ENCODE measurements at regions of chr11 and their contacts with region 1.

Region 1: GRCh38 chr11:18634140-18635032 is at the start of gene SPTY2D1:
- DNase-seq: peak; percentile 97
- H3K4me3 Mint-ChIP-seq: peak within 1 kb of the TSS; percentile 97
- H3K27ac Mint-ChIP-seq: peak within 1 kb of the TSS; percentile 99
- H3K4me1 Mint-ChIP-seq: peaks cover 32% of the 10 kb centered on the region
- H3K27me3 Mint-ChIP-seq: no peaks in the 10 kb centered on the region
- total RNA-seq, gene SPTY2D1: 29.2 and 29.6 TPM in 2 replicates

Region 2: DNA sequence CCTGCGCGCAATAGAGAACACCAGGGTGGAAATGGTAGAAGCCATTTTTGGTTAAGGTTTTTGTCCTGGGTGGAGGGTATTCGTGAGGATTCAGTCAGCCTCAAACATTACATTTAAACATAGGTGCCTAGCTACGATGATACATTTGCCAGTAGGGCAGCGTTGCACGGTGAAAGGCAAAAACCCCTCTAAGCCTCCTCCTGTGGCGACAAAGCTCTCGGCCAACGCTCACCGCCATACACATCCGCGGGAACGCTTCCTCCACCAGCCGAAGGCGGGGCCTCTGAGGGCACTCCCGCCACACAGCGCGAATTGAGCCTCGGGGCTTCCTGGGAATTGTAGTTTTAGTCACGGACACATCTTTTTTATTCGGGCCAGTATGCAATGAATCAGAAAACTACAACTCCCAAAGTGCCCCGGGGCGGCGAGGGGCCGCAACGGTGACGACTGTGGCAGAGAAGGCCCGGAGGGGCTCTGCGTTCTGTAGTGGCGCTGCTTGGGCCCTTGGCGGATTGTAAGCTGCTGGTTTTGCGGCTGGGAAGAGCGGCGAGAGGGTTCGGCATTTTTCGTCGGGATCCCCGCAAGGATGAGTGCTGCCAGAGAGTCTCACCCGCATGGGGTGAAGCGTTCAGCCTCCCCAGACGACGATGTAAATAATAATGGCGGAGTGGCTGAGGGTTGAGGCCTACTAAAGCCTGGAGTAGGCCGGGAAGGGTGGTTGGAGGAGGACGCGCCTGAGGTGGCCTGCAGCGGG is 1896.0 kb before region 1 on chr11 and contains the start of gene C11orf58:
- intact Hi-C with region 1: loop called (anchors 1 kb)
- DNase-seq: peak; percentile 93
- H3K4me3 Mint-ChIP-seq: peak within 1 kb of the TSS; percentile 73
- H3K27ac Mint-ChIP-seq: peak within 1 kb of the TSS; percentile 88
- H3K4me1 Mint-ChIP-seq: peaks cover 32% of the 10 kb centered on the region
- H3K27me3 Mint-ChIP-seq: no peaks in the 10 kb centered on the region
- total RNA-seq, gene C11orf58: 150 and 152 TPM in 2 replicates

Region 3: DNA sequence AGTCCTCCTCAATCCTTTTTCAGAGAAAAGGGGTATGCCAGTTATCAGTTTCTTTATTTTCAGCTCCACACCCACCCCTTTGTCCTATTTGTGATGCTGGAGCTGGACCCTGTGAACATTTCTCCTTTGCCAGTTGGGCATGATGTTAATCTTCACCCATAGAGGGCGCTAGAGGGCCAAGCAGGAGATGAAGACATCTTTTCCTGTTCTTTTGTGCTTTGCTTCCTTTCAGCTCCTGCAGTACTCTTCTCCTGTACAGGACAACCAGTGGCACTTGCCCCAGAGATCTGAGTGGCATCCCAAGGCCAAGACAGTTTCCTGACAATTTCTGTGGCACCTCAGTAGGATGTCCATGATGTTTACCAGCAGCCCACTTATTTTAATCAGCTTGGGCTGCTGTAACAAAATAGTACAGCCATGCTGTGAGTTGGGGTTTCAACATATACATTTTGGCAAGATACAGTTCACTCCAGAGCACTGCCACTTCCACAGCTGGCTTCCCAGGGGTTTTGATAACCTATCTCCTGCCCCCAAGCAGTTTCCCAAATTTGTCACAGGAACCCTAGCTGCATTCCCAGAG is 390.5 kb before region 1 on chr11:
- intact Hi-C with region 1: loop called (anchors 10 kb)
- DNase-seq: peak; percentile 65
- H3K4me3 Mint-ChIP-seq: no peak overlapping the region
- H3K27ac Mint-ChIP-seq: peak overlapping the region; percentile 10
- H3K4me1 Mint-ChIP-seq: peaks cover 39% of the 10 kb centered on the region
- H3K27me3 Mint-ChIP-seq: peaks cover 27% of the 10 kb centered on the region

Region 4: DNA sequence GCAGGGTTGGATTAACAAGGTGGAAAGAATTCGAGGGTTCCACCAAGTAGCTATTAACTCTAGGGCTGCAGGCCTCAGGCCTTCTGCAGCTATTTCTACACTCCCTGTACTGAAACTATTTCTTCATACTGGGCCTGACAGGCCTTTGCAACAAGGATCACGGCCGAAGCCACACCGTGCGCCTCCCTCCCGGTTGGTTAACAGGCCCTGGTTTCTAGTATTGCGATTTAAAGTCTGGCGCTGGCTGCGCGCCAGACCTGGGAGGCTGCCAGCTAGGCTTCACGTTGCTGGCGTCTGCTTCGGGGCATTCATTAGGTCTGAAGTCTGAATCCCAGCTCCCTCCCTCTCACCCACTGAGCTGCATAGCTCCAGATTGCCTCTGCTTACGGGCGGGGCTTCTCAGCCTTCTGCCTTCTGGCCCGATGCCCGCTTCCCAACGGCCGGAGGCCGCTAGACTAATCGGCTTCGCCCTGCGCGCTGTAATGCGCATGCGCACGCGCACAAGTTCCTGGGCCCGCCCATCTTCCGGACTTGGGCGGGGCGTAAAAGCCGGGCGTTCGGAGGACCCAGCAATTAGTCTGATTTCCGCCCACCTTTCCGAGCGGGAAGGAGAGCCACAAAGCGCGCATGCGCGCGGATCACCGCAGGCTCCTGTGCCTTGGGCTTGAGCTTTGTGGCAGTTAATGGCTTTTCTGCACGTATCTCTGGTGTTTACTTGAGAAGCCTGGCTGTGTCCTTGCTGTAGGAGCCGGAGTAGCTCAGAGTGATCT is 238.5 kb before region 1 on chr11:
- intact Hi-C with region 1: loop called (anchors 1 kb)
- DNase-seq: peak; percentile 96
- H3K4me3 Mint-ChIP-seq: peak overlapping the region; percentile 99
- H3K27ac Mint-ChIP-seq: peak overlapping the region; percentile 98
- H3K4me1 Mint-ChIP-seq: peaks cover 67% of the 10 kb centered on the region
- H3K27me3 Mint-ChIP-seq: no peaks in the 10 kb centered on the region

Region 5: DNA sequence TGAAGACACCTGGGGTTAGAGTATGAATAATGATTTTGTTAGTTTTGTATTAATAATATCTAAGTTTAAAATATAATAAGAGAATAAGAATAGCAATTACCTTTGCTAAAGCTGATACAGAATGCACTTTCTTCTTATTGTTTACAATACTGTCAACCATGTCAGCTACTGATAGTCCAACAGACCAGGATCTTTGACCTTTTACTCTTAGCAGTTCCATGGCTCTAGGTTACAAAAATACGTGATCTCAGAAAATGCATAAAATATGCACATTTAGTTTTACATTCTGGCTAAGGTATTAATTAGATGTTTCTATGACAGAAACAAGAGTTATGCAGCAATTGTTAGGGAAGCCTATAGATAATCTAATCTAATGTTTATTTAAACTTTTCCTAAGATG is 100.2 kb before region 1 on chr11:
- intact Hi-C with region 1: no loop called
- DNase-seq: no peak
- H3K4me3 Mint-ChIP-seq: no peak overlapping the region
- H3K27ac Mint-ChIP-seq: no peak overlapping the region
- H3K4me1 Mint-ChIP-seq: no peaks in the 10 kb centered on the region
- H3K27me3 Mint-ChIP-seq: no peaks in the 10 kb centered on the region

Region 6: GRCh38 chr11:18578975-18579598 is 55.3 kb before region 1 on chr11:
- intact Hi-C with region 1: loop called (anchors 2 kb)
- DNase-seq: peak; percentile 21
- H3K4me3 Mint-ChIP-seq: peak overlapping the region; percentile 61
- H3K27ac Mint-ChIP-seq: peak overlapping the region; percentile 80
- H3K4me1 Mint-ChIP-seq: peaks cover 65% of the 10 kb centered on the region
- H3K27me3 Mint-ChIP-seq: no peaks in the 10 kb centered on the region

Region 7: GRCh38 chr11:18650859-18651557 is 16.6 kb after region 1 on chr11:
- intact Hi-C with region 1: loop called (anchors 1 kb)
- DNase-seq: peak; percentile 47
- H3K4me3 Mint-ChIP-seq: no peak overlapping the region
- H3K27ac Mint-ChIP-seq: no peak overlapping the region
- H3K4me1 Mint-ChIP-seq: peaks cover 13% of the 10 kb centered on the region
- H3K27me3 Mint-ChIP-seq: no peaks in the 10 kb centered on the region

Region 8: DNA sequence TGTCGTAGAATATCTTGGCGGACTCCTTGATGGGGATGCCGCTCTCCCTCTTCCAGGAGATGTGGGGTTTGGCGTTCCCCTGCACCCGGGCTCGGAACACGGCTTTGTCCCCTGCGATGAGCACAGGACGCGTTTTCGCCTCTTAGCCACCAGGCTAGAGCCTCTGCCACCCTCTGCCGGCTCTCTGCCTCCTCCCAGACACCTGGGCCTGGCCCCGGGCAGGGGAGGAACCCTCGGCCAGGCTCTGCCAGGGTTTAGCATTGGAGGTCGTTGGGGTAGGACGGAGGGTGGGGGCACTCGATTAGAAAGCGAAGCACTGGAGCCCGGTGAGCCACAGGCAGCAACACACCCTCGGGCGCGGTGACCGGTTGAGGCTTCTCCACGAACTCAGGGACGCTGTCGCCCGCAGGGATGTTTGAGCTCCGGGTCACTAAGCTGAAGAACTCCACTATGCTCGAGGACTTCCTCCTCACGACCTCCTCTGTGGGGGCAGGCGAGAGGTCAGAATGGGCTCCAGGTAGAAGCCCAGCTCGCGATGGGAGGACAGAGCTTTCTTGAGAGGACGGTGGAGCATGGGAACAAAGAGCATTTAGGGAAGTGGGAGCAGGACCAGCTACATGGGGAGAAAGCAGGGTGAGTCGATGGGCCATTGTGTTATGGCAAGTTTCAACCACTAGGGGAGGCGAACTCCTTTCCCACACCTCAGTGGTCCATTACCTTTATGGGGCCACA is 87.3 kb after region 1 on chr11:
- intact Hi-C with region 1: loop called (anchors 5 kb)
- DNase-seq: peak; percentile 38
- H3K4me3 Mint-ChIP-seq: peak overlapping the region; percentile 87
- H3K27ac Mint-ChIP-seq: no peak overlapping the region
- H3K4me1 Mint-ChIP-seq: peaks cover 21% of the 10 kb centered on the region
- H3K27me3 Mint-ChIP-seq: peaks cover 31% of the 10 kb centered on the region